ENCODE measurements at regions of chr5 and their contacts with region 1.

Region 1: DNA sequence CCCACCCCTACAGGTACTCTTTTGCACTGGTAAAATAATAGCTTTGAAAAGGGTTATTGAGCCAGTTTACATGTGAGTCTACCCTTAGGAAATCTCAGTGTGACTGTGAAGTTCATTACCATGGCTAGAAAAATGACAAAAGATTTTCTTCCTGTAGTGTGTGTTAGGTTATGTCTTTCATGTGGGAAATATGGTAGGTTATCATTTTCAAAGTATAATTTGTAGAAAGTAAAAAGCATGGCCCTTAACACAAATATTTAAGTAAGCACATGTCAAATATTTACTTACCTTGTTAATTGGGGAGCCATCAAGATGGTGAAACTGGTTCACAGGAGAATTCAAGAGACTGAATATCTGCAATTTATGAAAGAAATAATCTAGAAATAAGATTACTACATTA is 37.3 kb upstream of the PLPP1 start:
- DNase-seq: no peak
- ATAC-seq: no peak
- H3K4me3 ChIP-seq: no peak overlapping the region
- H3K4me3 Mint-ChIP-seq: no peak overlapping the region
- H3K27ac ChIP-seq: no peak overlapping the region
- H3K27ac Mint-ChIP-seq: no peak overlapping the region
- H3K4me1 ChIP-seq: peaks cover 0 to 3% of the 10 kb centered on the region in 2 experiments
- H3K4me1 Mint-ChIP-seq: peaks cover 0 to 15% (median 2%) of the 10 kb centered on the region in 3 donors
- H3K27me3 ChIP-seq: peaks cover 0 to 3% of the 10 kb centered on the region in 2 experiments
- H3K27me3 Mint-ChIP-seq: peaks cover 0 to 1% of the 10 kb centered on the region in 2 donors

Region 2: GRCh38 chr5:55583578-55583977 is 11.6 kb after region 1 on chr5:
- CTCF ChIA-PET with region 1: no interaction called
- POLR2A ChIA-PET with region 1: interaction called in 1 of 2 experiments, 10 read pairs
- DNase-seq: no peak
- ATAC-seq: no peak
- H3K4me3 ChIP-seq: no peak overlapping the region
- H3K4me3 Mint-ChIP-seq: no peak overlapping the region
- H3K27ac ChIP-seq: no peak overlapping the region
- H3K27ac Mint-ChIP-seq: no peak overlapping the region
- H3K4me1 ChIP-seq: peaks cover 5 to 6% of the 10 kb centered on the region in 2 experiments
- H3K4me1 Mint-ChIP-seq: peaks cover 12 to 14% (median 13%) of the 10 kb centered on the region in 3 donors
- H3K27me3 ChIP-seq: no peaks in the 10 kb centered on the region
- H3K27me3 Mint-ChIP-seq: no peaks in the 10 kb centered on the region

Measured in T-cell (primary cell).